ENCODE measurements at regions of chr18 and their contacts with region 1.

Region 1: GRCh38 chr18:2589345-2590068 is 18.1 kb downstream of the NDC80 start:
- DNase-seq: no peak
- H3K4me3 Mint-ChIP-seq: peak overlapping the region; percentile 65
- H3K27ac Mint-ChIP-seq: peak overlapping the region; percentile 94
- H3K4me1 Mint-ChIP-seq: peaks cover 42% of the 10 kb centered on the region
- H3K27me3 Mint-ChIP-seq: no peaks in the 10 kb centered on the region

Region 2: DNA sequence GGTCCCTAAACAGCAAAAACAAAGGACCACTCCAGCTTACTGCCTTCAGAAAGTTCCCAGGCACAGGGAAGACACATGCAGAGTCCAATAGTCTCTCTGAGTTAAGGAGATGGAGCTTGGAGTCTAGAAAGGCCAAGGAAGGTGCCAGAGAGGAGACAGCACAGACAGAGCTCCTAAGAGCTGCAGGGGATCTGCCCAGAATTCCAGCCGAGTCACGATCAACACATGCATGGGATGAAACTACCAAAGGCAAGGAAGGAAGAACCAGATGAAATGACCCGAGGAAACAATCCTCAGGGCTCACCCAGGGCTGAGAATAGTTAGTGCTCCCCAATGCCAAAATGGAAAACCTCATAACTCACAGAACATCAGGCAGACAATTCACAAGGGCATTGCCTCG is 33.6 kb before region 1 on chr18:
- intact Hi-C with region 1: no loop called
- DNase-seq: no peak
- H3K4me3 Mint-ChIP-seq: no peak overlapping the region
- H3K27ac Mint-ChIP-seq: no peak overlapping the region
- H3K4me1 Mint-ChIP-seq: no peaks in the 10 kb centered on the region
- H3K27me3 Mint-ChIP-seq: no peaks in the 10 kb centered on the region

Region 3: DNA sequence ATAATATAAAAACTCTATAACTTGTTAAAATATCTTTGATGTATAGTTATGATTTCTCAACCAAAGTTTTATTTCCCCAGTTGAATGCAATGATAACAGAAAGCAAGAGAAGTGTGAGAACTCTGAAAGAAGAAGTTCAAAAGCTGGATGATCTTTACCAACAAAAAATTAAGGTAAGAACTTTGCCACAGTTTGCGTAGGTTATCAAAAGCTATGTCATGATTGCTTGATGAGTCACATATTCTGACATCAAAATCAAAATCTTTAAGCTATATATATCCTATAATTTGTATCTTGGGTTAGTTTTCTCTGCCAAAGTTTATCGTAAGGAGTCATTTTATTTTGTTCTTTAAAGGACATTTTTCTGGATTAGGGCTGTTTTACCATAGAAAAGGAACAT is 16.8 kb after region 1 on chr18:
- intact Hi-C with region 1: loop called (anchors 2 kb)
- DNase-seq: no peak
- H3K4me3 Mint-ChIP-seq: peak overlapping the region; percentile 70
- H3K27ac Mint-ChIP-seq: peak overlapping the region; percentile 88
- H3K4me1 Mint-ChIP-seq: peaks cover 44% of the 10 kb centered on the region
- H3K27me3 Mint-ChIP-seq: no peaks in the 10 kb centered on the region

Region 4: DNA sequence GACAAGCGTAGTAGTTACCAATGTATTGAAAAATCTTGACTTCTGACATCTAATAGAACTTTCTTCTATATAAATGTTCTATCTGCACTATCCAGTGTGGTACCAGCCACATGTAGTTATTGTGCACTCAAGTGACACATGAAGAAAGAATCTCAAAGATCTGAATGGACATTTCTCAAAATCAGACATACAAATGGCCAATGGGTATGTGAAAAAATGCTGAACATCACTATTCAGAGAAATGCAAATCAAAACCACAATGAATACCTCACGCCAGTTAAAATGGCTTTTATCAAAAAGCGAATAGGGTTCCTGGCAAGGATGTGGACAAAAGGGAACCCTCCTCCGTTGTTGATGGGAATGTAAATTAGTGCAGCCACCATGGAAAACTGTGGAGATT is 28.5 kb after region 1 on chr18:
- intact Hi-C with region 1: no loop called
- DNase-seq: no peak
- H3K4me3 Mint-ChIP-seq: no peak overlapping the region
- H3K27ac Mint-ChIP-seq: no peak overlapping the region
- H3K4me1 Mint-ChIP-seq: no peaks in the 10 kb centered on the region
- H3K27me3 Mint-ChIP-seq: no peaks in the 10 kb centered on the region